Sigmoid colon (tissue), 7 donors: ENCODE measurements at regions of chr2 and their contacts with region 1.

Region 1: GRCh38 chr2:120735746-120736170 is at the start of gene GLI2:
- DNase-seq: peak; percentile 89
- H3K4me3 ChIP-seq: peak within 1 kb of the TSS; percentile 48 to 62 (median 59)
- H3K27ac ChIP-seq: peak within 1 kb of the TSS; percentile 87 to 95 (median 90)
- H3K4me1 ChIP-seq: peaks cover 0 to 50% (median 44%) of the 10 kb centered on the region in 4 donors
- H3K27me3 ChIP-seq: peaks cover 0 to 15% (median 0%) of the 10 kb centered on the region in 3 donors
- CTCF ChIP-seq: peak in 3 of 4 experiments; percentile 24 to 75 (median 35)
- EP300 ChIP-seq: no peak
- POLR2A ChIP-seq: no peak
- total RNA-seq, gene GLI2: 2.1 to 6.4 (median 2.9) TPM

Region 2: DNA sequence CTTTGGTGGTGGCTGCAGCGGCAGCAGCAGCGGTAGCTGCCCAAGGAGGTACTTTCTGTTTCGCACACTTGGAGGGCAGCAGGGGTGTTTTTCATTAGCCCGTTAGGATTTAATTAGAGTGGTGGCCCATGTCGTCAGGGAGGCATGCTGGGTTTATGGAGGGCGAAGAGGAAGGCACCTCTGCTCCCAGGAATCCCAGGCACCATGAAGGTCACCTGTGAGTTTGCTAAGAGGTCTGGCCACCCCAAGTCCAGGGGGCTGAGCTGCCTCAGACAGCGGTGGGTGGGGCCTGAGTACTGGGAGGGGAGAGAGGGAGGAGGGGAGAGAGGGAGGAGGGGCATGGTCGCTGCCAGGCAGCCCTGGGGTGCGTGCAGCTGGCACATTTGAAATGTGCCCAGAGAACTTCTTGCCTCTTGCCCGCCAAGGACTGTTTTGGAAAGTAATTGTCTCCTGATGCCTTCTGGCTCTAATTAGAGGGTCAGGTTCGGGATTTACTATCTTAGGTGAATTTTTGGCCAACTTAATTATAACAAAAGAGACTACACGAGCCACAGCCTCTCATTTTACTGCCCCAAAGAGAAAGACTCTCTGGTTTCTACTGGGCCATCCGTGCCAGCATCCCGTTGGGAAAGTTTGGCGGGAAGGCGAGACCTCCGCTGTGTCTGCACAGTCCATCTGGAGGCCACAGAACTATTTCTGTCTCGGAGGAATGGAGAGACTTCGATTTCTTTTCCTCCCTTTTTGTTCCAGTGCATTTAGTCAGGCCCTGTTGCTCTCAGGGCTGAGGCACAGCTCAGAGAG is 61.9 kb after region 1 on chr2:
- intact Hi-C with region 1: loop called (anchors 5 kb)
- DNase-seq: peak; percentile 87
- H3K4me3 ChIP-seq: peak overlapping the region in 2 of 4 donors; percentile 16 to 24
- H3K27ac ChIP-seq: peak overlapping the region; percentile 1 to 76 (median 72)
- H3K4me1 ChIP-seq: peaks cover 0 to 32% (median 29%) of the 10 kb centered on the region in 4 donors
- H3K27me3 ChIP-seq: no peaks in the 10 kb centered on the region
- CTCF ChIP-seq: no peak
- EP300 ChIP-seq: no peak
- POLR2A ChIP-seq: no peak

Region 3: GRCh38 chr2:120867290-120868241 is 131.8 kb after region 1 on chr2:
- intact Hi-C with region 1: loop called (anchors 5 kb)
- DNase-seq: peak; percentile 93
- H3K4me3 ChIP-seq: peak overlapping the region; percentile 35 to 51 (median 46)
- H3K27ac ChIP-seq: peak overlapping the region; percentile 87 to 93 (median 90)
- H3K4me1 ChIP-seq: peaks cover 0 to 54% (median 44%) of the 10 kb centered on the region in 4 donors
- H3K27me3 ChIP-seq: no peaks in the 10 kb centered on the region
- CTCF ChIP-seq: no peak
- EP300 ChIP-seq: no peak
- POLR2A ChIP-seq: peak in 1 of 2 donors; percentile 18

Region 4: DNA sequence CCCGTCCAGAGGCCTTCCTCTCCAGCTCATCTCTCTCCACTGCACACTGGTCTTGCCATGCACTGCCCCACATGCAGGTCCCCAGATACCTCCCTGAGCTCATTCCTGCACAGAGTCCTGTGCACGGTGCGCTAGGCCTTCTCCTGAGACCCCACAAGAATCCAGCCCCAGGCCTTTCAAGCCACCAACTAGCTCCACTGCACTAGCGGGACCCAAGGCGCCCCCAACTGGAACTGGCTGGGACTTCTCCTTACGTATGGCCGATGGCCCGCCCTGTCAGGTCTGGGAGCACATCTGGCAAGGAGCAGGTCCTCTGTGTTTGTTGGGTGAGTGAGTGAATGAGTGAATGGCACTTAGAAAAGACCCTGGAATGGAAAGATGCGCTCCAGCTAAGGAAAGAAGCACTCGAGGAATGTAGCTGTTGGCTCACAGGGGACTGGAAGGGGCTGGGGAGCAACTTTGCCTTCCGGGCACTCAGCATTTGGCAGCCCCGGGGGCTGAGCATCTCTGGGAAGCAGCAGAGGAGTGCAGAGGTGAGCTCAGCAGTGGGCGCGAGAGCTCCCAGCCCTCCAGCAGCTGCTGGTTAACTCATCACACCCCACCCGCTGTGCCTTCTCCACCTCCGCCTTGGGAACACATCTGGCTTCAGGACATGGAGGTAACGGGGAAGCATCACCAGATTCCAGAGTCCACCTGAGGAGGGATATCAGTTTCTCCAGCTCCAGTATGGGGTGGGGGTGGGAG is 223.0 kb after region 1 on chr2:
- intact Hi-C with region 1: loop called (anchors 5 kb)
- DNase-seq: no peak
- H3K4me3 ChIP-seq: no peak overlapping the region
- H3K27ac ChIP-seq: peak overlapping the region in 2 of 4 donors; percentile 36 to 55
- H3K4me1 ChIP-seq: peaks cover 0 to 17% (median 16%) of the 10 kb centered on the region in 4 donors
- H3K27me3 ChIP-seq: no peaks in the 10 kb centered on the region
- CTCF ChIP-seq: peak in 1 of 4 experiments; percentile 12
- EP300 ChIP-seq: no peak
- POLR2A ChIP-seq: no peak